Spleen (tissue), 13 donors: ENCODE measurements at regions of chr1 and their contacts with region 1.

Region 1: DNA sequence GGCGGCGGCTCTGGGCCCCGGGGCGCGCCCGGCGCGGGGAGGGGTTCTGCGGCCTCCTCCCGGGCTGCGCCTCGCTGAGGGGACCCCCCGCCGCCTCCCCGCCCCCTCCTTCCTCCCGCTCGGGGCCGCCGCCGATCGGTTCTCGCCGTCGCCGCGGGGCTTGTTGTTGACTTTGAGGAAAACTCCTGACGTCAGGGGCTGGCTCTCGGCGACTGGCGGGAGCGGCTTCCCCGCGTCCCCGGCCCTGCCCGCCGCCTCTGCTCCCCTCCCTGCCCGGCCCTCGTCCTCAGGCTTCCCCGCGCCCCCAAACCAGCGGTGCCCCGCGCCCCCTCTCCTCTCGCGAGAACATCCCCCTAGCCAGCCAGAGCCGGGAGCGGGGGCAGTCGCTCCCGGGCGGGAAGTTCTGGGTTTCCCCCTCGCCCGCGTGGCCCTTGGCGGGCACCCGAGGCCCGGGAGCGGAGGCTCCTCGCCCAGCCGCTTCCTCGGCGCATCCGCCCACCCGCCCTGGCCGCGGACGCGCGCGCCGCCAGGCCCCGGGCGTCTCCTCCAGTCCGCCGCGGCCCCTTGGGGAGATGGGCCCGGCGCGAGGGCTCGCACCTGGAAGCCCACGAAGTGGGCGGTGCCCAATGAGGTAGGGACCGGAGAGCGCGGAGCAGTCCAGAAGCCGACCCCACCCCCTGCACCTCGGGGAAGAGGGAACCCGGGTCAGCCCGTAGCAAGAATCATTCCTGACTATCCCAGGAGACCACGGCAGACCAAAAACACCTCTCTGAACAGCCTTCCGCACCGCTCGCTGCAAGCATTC is 611 bp upstream of the AKT3 start:
- DNase-seq: no peak
- H3K4me3 ChIP-seq: peak overlapping the region; percentile 57 to 92 (median 86)
- H3K27ac ChIP-seq: peak overlapping the region; percentile 94 to 98 (median 97)
- H3K4me1 ChIP-seq: peaks cover 0 to 54% (median 30%) of the 10 kb centered on the region in 6 donors
- H3K27me3 ChIP-seq: peaks cover 0 to 27% (median 0%) of the 10 kb centered on the region in 7 donors
- CTCF ChIP-seq: no peak
- POLR2A ChIP-seq: peak in 1 of 3 donors; percentile 26

Region 2: DNA sequence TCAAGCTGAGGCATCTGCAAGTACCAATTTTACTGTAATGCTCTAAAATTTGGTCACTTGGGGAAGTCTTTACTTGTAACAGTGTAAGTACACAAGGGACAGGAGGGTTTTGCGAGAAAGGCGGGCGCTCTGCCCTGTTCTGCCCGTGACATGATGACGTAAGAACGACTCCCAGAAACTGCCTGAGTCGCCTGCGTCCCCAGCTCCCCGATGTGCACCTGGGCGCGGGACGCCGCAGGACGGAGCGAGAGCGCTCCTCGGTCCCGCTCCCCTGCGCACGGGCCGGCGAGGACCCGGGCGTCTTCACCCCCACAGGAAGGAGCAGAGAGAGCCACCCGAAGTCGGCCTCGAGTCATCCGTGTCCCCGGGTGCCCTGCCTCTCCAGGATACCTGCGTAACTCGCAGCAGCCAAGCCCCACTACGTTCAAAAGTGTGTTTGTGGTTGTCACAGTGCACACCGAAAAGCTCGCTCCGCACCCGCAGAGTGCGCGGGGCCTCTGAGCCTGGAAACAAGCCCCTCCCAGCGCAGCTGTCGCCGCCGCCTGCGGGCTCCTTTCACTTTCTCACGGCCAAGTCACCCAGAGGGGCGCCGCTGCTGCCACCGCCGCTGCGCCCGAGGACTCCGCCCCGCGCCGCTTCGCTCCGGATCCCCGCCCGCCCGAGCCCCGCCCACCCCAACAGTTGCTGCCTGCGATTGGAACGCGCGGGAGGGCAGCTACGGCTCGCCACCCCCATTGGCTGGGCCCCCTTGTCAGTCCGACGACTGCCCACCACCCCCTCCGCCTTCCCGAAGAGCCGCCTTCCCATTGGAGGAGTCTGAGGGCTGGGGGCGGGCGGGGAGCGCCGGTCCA is 197.2 kb after region 1 on chr1:
- intact Hi-C with region 1: loop called (anchors 10 kb)
- DNase-seq: peak; percentile 100
- H3K4me3 ChIP-seq: peak overlapping the region; percentile 51 to 88 (median 69)
- H3K27ac ChIP-seq: peak overlapping the region; percentile 97 to 100 (median 100)
- H3K4me1 ChIP-seq: peaks cover 22 to 50% (median 41%) of the 10 kb centered on the region in 6 donors
- H3K27me3 ChIP-seq: no peaks in the 10 kb centered on the region
- CTCF ChIP-seq: peak in 2 of 11 experiments; percentile 24 to 47
- POLR2A ChIP-seq: peak; percentile 90 to 97 (median 90)